WTC11 (cell line): ENCODE measurements at regions of chr10 and their contacts with region 1.

Region 1: DNA sequence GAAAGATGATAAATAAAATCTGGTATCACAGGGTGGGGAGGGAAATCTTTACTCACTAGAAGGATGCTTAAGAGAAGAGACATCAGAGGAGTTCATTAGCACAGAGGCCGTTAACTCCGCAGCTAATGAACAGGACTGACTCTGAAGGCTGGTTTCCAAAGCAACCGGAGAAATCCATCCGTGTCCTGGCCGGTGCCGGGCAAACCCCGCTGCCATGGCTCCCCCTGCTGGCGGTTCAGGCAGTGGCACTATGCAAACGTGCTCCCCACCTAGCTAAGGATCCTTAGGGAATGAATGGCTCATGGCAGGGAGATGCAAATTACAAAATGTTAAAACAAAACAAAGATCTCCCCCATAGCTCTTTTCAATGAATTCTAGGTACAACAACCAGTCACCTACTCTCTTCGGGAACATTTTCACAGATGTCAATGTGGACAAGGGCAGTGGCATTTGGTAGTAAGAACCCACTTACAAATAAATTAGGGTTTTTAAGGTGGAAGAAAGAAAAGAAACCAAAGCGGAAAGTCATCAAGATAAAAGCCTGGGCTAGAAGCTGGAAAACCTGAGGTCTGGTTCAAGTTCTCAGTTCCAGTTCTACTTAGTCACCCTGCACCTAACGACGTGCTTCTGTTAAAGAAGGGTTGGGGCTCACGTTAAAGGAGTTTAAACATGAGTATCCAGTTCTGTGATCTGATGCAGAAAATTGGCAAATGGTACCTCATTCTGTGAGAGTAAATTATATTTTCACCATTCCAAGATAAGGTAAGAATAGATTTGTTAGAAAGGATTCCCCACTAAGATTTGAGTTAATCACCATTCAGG is 138.2 kb downstream of the SVIL start:
- DNase-seq: peak; percentile 94
- ATAC-seq: peak; percentile 99
- H3K4me3 Mint-ChIP-seq: no peak overlapping the region
- H3K27ac Mint-ChIP-seq: peak overlapping the region; percentile 93
- H3K4me1 Mint-ChIP-seq: peaks cover 22% of the 10 kb centered on the region
- H3K27me3 Mint-ChIP-seq: no peaks in the 10 kb centered on the region
- CTCF ChIP-seq: peak; percentile 72

Region 2: DNA sequence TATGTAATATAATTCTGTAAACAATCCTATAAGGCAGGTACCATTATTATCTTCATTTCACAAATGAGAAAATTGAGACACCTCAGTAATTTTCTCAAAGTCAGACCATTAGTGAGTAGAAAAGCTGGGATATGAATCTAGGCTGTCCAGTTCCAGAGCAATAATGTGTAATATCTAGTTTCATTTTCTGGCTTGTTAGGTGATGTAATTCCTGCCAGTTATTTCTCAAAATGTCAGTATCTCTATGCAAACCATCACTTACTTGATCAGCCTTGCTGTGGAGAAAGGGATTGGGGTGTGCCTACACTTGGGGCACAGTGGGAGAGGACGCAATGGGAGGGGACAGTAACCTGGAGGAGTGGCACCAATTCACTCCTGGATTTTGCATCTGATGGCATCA is 50.2 kb before region 1 on chr10:
- CTCF ChIA-PET with region 1: interaction called, 19 read pairs
- POLR2A ChIA-PET with region 1: no interaction called
- DNase-seq: no peak
- ATAC-seq: no peak
- H3K4me3 Mint-ChIP-seq: no peak overlapping the region
- H3K27ac Mint-ChIP-seq: no peak overlapping the region
- H3K4me1 Mint-ChIP-seq: peaks cover 32% of the 10 kb centered on the region
- H3K27me3 Mint-ChIP-seq: no peaks in the 10 kb centered on the region
- CTCF ChIP-seq: no peak

Region 3: DNA sequence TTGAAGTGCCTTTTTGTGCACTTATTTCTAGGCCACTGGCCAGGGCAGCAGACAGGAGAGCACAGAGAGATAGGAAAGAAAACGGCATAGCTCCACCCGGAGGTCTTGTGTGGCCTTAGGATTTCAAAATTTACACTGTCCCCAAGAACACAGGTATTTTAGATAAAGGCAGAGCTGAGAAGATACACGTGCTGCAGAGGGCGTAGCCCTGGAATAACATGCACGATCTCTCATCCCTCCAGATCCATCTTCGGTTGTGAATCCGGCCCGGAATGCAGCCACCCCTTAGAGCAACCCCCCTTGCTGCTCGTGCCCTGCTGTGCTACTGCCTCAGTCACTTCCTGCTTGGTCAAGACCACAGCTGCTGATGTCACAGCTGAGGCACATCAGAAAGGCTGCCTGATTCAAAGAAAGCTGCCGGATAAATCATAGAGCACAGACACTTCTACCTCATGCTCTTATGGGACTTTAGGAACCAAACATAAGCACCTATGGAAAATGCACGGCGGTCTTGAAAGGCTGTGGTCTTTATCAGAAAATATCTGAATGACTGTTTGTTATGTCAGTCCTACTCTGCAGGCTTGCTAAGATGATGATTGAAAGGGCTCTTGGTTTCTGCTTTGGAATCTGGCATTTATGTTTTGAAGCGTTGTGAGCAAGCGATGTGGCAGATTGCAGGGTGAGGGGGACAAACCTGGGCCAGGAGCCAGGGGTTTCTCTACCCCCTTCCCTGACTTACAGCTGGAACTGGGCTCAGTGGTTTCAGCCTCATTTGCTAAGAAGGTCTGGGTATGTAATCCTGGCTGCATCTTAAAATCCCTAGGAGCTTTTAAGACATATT is 13.7 kb before region 1 on chr10:
- CTCF ChIA-PET with region 1: interaction called, 27 read pairs
- POLR2A ChIA-PET with region 1: no interaction called
- DNase-seq: peak; percentile 53
- ATAC-seq: peak; percentile 81
- H3K4me3 Mint-ChIP-seq: no peak overlapping the region
- H3K27ac Mint-ChIP-seq: peak overlapping the region; percentile 65
- H3K4me1 Mint-ChIP-seq: peaks cover 30% of the 10 kb centered on the region
- H3K27me3 Mint-ChIP-seq: no peaks in the 10 kb centered on the region
- CTCF ChIP-seq: no peak

Region 4: DNA sequence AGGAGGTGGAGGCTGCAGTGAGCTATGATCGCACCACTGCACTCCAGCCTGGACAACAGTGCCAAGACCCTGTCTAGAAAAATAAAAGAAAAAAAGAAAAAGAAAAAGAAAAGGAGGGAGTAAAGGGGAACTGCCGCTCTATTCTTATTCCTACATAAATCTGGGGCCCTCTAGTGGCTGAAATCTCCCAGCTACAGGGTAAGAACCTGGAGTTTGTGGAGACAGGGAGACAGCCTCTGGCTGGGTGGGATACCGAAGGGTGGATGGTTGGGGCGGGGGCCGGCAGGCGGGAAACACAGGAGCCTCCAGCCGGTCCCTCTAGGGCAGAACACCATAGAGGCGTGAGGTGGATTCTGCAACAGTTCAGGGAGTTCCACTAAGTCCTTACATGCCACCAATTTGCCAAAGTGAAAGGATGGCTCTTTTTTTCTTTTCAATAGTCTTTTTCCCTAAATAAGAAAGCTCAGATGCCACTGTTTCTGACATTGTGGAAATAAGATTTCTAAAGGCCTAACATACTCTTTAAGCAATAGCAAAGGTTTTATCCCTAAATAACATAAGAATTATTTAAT is 20.9 kb after region 1 on chr10:
- CTCF ChIA-PET with region 1: interaction called, 22 read pairs
- POLR2A ChIA-PET with region 1: no interaction called
- DNase-seq: peak; percentile 82
- ATAC-seq: peak; percentile 98
- H3K4me3 Mint-ChIP-seq: no peak overlapping the region
- H3K27ac Mint-ChIP-seq: no peak overlapping the region
- H3K4me1 Mint-ChIP-seq: peaks cover 14% of the 10 kb centered on the region
- H3K27me3 Mint-ChIP-seq: no peaks in the 10 kb centered on the region
- CTCF ChIP-seq: peak; percentile 44; the same call in 1 of the 2 replicates

Region 5: DNA sequence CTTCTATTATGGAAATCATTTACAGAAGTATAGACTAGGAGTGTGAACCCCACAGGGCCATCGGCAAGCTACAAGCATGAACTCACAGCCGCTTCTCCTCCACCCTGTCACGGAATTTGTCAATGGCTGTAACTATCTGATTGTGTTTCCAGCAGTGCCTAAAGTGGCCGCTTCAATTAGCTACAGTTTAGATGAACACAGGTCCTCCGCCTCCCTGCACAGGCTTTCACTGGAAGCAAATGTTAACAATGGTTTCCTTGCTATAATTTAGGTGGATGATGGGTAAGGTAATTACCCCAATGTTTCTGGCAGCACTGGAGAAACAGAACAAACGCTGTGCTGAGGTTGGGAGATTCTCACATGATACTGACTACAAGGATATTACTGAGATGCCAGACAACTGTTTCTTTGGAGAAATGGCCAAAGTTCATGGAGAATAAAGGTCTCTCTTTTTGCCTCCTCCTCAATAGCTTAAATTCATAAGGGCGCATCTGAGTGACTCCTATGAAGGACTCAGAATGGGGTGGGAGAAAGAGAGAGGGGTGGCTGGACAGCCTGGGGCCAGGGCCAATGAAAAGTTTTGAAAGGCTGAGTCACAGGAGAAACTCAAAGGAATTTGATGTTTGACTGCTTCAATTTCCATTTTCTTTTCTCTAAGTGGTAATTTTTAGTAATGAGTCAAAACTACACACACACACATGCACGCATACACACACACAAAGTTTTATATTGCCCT is 59.4 kb after region 1 on chr10:
- CTCF ChIA-PET with region 1: no interaction called
- POLR2A ChIA-PET with region 1: no interaction called
- DNase-seq: no peak
- ATAC-seq: peak; percentile 40; the same call in 1 of the 2 replicates
- H3K4me3 Mint-ChIP-seq: no peak overlapping the region
- H3K27ac Mint-ChIP-seq: peak overlapping the region; percentile 69
- H3K4me1 Mint-ChIP-seq: peaks cover 25% of the 10 kb centered on the region
- H3K27me3 Mint-ChIP-seq: no peaks in the 10 kb centered on the region
- CTCF ChIP-seq: no peak

Region 6: DNA sequence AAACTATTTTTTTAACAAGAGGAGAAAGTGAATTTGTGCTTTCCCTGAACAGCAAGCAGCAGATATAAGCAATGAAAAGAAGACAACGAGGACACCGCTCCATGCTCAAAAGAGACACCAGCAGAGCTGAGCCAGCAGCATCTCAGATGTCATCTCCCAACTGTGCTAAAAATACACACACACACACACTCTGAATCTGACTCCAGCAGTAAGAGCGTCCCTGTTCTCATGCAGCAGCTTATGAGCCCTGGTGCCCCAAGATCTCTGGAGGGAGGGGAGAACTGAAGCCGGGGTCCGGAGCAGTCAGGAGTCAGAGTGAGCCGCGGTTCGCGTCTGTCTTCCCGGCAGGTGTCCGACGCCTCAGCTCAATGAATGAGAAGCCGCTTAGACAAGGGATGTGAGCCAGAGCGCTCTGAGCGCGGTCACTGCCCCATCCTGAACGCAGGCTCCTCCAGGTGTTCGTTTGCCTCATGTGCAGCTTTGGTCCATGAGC is 89.0 kb after region 1 on chr10:
- CTCF ChIA-PET with region 1: interaction called, 10 read pairs
- POLR2A ChIA-PET with region 1: no interaction called
- DNase-seq: peak; percentile 72
- ATAC-seq: peak; percentile 78
- H3K4me3 Mint-ChIP-seq: peak overlapping the region; percentile 11; the same call in 1 of the 2 replicates
- H3K27ac Mint-ChIP-seq: peak overlapping the region; percentile 73
- H3K4me1 Mint-ChIP-seq: peaks cover 56% of the 10 kb centered on the region
- H3K27me3 Mint-ChIP-seq: peaks cover 3% of the 10 kb centered on the region; the same call in 1 of the 2 replicates
- CTCF ChIP-seq: no peak

Region 7: DNA sequence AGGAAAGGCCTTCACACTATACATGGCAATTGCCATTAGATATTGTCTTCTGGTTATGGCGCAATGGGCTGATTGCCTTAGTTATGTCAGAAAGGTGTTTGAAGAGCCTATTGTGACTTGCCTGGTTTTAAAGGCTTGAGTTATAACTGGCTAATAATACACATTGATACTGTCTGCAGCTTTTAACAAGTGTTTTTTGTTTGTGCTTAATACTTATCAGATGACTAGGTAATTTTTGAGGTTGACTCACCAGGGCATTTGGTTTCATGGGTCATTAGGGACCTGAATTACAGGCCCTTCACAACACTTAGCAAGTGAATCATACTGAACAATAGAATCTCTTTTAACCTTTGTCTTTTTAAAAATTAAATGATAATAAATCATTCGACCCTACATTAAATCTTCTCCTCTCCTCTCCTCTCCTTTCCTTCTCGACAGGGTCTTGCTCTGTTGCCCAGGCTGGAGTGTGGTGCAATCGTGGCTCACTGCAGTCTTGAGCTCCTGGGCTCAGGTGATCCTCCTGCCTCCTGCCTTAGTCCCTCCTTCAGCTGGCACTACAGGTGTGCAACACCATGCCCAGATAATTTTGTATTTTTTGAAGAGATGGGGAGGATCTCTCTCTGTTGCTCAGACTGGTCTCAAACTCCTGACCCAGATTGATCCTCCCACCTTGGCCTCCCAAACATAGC is 366.5 kb after region 1 on chr10:
- CTCF ChIA-PET with region 1: no interaction called
- POLR2A ChIA-PET with region 1: no interaction called
- DNase-seq: no peak
- ATAC-seq: no peak
- H3K4me3 Mint-ChIP-seq: no peak overlapping the region
- H3K27ac Mint-ChIP-seq: no peak overlapping the region
- H3K4me1 Mint-ChIP-seq: peaks cover 5% of the 10 kb centered on the region
- H3K27me3 Mint-ChIP-seq: no peaks in the 10 kb centered on the region
- CTCF ChIP-seq: no peak